ENCODE measurements at regions of chr1 and their contacts with region 1.

Region 1: DNA sequence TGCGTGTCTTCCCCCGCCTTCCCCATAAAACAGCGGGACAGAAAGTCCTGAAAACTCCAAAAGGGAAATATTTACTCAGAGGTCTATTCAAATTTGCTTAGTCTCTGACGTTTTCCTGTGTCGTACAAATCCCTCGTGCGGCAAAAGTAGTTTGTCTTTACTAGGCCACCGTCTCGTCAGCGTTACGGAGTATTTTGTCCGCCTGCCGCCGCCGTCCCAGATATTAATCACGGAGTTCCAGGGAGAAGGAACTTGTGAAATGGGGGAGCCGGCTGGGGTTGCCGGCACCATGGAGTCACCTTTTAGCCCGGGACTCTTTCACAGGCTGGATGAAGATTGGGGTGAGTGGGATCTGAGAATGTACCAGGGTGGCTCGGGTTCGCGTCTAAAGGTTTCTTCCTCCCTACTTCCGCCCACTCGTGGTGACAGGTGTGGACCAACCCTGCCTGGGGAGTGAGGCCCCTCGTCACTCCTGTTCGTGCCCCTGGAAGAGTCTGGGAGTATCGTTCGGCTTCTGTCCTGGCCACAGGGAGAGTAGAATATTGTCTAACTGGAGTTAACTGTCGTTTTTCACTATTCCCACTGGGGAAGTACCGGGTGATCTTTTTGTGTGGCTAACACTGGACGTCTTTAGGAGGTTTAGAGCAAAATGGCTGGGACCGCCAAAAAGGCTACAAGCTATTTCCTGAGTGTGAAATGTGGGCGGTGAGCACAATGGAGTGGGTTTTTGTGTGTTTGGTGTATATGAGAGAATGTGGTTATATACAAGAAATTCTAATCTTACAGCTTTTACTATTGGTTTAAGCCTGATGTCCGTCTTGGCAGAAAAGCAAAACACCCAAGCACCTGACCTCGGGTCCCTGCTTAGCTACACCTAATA is at the start of gene ATF6:
- DNase-seq: peak; percentile 88
- ATAC-seq: peak; percentile 80
- H3K4me3 Mint-ChIP-seq: peak within 1 kb of the TSS; percentile 97
- H3K27ac Mint-ChIP-seq: peak within 1 kb of the TSS; percentile 98
- H3K4me1 Mint-ChIP-seq: peaks cover 44% of the 10 kb centered on the region
- H3K27me3 Mint-ChIP-seq: no peaks in the 10 kb centered on the region
- CTCF ChIP-seq: no peak
- total RNA-seq, gene ATF6: 16.9 to 17.3 TPM

Region 2: DNA sequence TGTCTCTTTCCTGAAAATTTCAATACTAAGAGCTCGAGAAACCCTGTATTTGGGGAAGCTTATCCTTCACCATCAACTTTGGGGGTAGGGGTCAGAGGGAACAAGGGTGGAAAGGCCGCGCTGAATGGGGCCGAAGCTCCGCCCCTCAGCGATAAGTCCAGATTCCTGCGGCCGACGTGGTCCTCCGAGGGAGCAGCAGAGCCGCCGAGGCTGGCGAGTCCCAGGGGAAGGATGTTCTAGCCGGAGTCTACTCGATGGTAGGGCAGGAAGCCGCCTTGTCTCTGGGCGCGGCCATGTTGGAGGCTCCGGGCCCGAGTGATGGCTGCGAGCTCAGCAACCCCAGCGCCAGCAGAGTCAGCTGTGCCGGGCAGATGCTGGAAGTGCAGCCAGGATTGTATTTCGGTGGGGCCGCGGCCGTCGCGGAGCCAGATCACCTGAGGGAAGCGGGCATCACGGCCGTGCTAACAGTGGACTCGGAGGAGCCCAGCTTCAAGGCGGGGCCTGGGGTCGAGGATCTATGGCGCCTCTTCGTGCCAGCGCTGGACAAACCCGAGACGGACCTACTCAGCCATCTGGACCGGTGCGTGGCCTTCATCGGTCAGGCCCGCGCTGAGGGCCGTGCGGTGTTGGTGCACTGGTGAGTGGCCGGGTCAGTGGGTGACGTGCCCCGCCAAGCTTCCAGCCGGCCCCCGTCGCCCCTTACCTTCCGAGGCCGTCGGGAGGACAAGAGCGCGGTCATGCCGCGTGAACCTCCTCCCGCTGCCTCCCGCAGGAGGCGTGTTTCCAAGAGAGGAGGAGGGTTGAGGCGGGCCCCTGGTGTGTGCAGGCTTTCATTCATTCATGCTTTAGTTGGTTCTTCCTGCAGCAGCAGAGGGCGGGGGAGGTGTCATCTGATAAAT is 16.6 kb before region 1 on chr1 and contains the start of gene DUSP12:
- CTCF ChIA-PET with region 1: interaction called, 25 read pairs
- POLR2A ChIA-PET with region 1: interaction called, 8 read pairs
- intact Hi-C with region 1: no loop called
- DNase-seq: peak; percentile 93
- ATAC-seq: peak; percentile 96
- H3K4me3 Mint-ChIP-seq: peak within 1 kb of the TSS; percentile 100
- H3K27ac Mint-ChIP-seq: peak within 1 kb of the TSS; percentile 99
- H3K4me1 Mint-ChIP-seq: peaks cover 42% of the 10 kb centered on the region
- H3K27me3 Mint-ChIP-seq: peaks cover 3% of the 10 kb centered on the region
- CTCF ChIP-seq: peak; percentile 12
- total RNA-seq, gene DUSP12: 25.3 to 25.4 TPM

Region 3: GRCh38 chr1:162035241-162035640 is 268.9 kb after region 1 on chr1:
- CTCF ChIA-PET with region 1: interaction called, 19 read pairs
- POLR2A ChIA-PET with region 1: no interaction called
- intact Hi-C with region 1: no loop called
- DNase-seq: peak; percentile 25
- ATAC-seq: peak; percentile 34
- H3K4me3 Mint-ChIP-seq: no peak overlapping the region
- H3K27ac Mint-ChIP-seq: no peak overlapping the region
- H3K4me1 Mint-ChIP-seq: peaks cover 6% of the 10 kb centered on the region
- H3K27me3 Mint-ChIP-seq: peaks cover 10% of the 10 kb centered on the region
- CTCF ChIP-seq: no peak

Measured in activated CD8-positive, alpha-beta T cell treated with anti-CD3 and anti-CD28 coated beads for 36 hours (primary cell).